ENCODE measurements at regions of chr14 and their contacts with region 1.

Region 1: GRCh38 chr14:22386924-22387775 is 201.9 kb downstream of the DAD1 start:
- DNase-seq: no peak

Region 2: GRCh38 chr14:22420598-22421186 is 33.5 kb after region 1 on chr14:
- intact Hi-C with region 1: loop called in 1 of 2 experiments (anchors 5 kb)
- DNase-seq: no peak

Region 3: GRCh38 chr14:22472935-22473854 is 86.0 kb after region 1 on chr14:
- intact Hi-C with region 1: loop called in 1 of 2 experiments (anchors 5 kb)
- DNase-seq: no peak

Region 4: DNA sequence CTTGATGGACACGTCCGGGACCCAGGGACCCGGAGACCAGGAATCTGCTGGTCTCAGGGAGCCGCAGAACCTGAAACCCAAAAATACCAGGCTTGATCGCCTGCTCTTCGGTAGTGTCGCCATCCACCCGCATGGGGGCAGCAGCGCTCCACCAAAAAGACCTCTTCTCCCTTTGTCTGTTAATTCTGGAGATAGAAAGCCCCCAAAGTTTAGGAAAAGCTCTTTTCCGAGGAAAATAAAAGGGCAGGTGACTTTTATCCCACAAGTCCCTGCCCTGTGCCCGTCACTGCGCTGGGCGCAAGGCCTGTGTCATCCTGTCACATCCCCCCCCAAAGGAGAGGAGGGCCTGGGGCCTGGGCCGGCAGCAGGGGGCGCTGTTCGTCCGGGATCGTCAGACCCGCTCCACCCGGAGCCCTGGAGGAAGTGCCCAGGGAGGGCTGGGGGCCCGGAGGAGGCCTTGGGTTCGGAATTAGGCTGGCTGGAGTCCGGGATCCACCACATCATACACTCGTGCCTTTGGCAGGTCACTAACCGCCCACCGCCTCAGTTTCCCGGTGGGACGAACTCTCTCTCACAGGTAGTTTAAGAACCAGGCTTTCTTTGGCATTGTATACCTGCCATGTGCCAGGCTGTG is 170.0 kb after region 1 on chr14:
- intact Hi-C with region 1: loop called in 1 of 2 experiments (anchors 10 kb)
- DNase-seq: peak; percentile 96

Region 5: DNA sequence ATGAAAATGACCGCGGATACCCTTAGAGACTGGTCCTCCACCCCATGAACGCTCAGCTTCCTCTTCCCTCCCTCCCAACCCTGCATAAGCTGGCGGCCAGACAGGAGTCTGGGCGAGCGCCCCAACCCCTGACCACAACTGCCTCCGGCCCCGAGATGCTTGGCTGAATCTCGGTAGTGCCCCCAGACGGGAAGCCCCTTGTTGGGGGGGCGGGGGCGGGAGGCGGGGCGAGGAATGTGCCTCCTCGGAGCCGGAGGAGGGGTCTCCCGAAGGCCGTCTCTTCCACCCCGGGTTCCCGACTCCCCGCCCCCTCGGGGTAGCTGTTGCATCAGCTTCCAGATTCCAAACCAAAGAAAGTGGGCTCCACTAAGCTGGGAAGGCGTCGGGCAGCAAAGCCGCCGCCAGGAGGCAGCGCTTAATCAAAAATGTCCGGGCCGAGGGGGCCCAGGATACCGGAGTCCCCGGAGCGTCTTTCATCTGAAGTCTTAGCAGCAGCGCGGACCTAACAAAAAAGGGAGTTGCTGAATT is 435.5 kb after region 1 on chr14:
- intact Hi-C with region 1: loop called in 1 of 2 experiments (anchors 5 kb)
- DNase-seq: peak; percentile 94

Measured in posterior vena cava (tissue), 2 donors.